ENCODE measurements at regions of chr9 and their contacts with region 1.

Region 1: DNA sequence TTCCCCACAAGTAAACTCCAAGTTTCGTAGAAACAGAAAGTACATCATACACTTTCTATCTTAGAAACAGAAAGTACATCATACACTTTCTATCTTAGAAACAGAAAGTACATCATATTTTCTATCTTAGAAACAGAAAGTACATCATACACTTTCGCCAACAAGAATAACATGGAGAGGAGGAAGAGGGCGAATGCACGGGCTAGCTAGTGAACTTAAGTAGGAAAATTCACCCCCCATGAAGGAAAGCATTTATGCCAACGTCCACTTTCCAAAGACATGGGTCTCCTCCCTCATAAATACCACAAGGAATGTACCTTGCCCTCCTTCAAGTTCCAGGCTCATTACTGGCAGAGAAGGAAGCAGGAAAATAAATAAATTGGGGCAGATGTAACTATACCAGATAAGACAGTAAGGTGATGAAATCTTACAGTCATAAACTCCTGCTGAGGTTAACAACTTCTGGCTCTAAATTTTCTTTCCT is 64.7 kb downstream of the FRMD3 start:
- DNase-seq: peak; percentile 14 to 45 (median 29)
- H3K4me3 ChIP-seq: peak overlapping the region; percentile 45 to 80 (median 72)
- H3K4me3 Mint-ChIP-seq: peak overlapping the region; percentile 78 to 91
- H3K27ac ChIP-seq: peak overlapping the region; percentile 97 to 98
- H3K27ac Mint-ChIP-seq: peak overlapping the region; percentile 98 to 100 (median 99)
- H3K4me1 ChIP-seq: peaks cover 47 to 49% of the 10 kb centered on the region in 2 donors
- H3K4me1 Mint-ChIP-seq: peaks cover 55% of the 10 kb centered on the region
- H3K27me3 ChIP-seq: no peaks in the 10 kb centered on the region
- H3K27me3 Mint-ChIP-seq: no peaks in the 10 kb centered on the region
- CTCF ChIP-seq: no peak

Region 2: GRCh38 chr9:83281306-83282255 is 191.9 kb before region 1 on chr9:
- intact Hi-C with region 1: no loop called
- DNase-seq: no peak
- H3K4me3 ChIP-seq: no peak overlapping the region
- H3K4me3 Mint-ChIP-seq: no peak overlapping the region
- H3K27ac ChIP-seq: no peak overlapping the region
- H3K27ac Mint-ChIP-seq: peak overlapping the region in 1 of 7 donors; percentile 55
- H3K4me1 ChIP-seq: peaks cover 0 to 4% of the 10 kb centered on the region in 2 donors
- H3K4me1 Mint-ChIP-seq: peaks cover 9% of the 10 kb centered on the region
- H3K27me3 ChIP-seq: no peaks in the 10 kb centered on the region
- H3K27me3 Mint-ChIP-seq: peaks cover 0 to 3% (median 2%) of the 10 kb centered on the region in 3 donors
- CTCF ChIP-seq: no peak

Region 3: DNA sequence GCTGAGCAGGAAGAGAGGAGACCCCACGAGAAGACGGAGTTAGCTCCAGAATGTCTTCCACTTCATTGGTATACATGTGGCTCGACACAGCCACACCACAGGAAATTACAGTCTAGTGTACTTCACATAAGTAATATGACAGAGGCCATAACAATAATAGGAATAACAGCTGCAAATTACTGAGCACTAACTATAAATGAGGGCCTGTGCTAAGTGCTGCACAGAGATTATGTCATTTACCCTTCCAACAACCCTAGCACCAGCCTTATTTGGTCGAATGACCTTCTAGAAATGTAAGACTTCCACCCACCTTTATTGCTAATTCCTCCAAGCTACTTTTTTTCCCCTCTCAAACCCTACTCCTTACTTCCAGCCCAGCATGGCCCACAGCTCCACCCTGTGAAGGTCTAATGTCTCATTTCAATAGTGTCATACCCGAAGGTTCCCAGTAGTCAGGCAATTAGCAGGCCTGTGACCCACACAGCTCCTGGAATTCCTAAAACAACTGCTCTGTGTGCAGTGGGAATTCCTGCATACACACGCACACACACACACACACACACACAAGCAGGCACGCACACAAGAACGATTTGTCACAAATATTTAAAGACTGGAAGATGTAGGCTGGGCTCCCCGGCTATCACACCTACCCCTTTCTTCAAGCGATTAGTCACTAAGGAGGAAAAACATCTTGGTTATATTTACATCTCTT is 69.8 kb before region 1 on chr9:
- intact Hi-C with region 1: loop called in 1 of 2 experiments (anchors 10 kb)
- DNase-seq: no peak
- H3K4me3 ChIP-seq: no peak overlapping the region
- H3K4me3 Mint-ChIP-seq: no peak overlapping the region
- H3K27ac ChIP-seq: no peak overlapping the region
- H3K27ac Mint-ChIP-seq: peak overlapping the region in 3 of 7 donors; percentile 1 to 54 (median 9)
- H3K4me1 ChIP-seq: peaks cover 23 to 33% of the 10 kb centered on the region in 2 donors
- H3K4me1 Mint-ChIP-seq: peaks cover 44% of the 10 kb centered on the region
- H3K27me3 ChIP-seq: no peaks in the 10 kb centered on the region
- H3K27me3 Mint-ChIP-seq: peaks cover 0 to 2% (median 0%) of the 10 kb centered on the region in 3 donors
- CTCF ChIP-seq: no peak

Region 4: GRCh38 chr9:83509402-83509801 is 35.9 kb after region 1 on chr9:
- intact Hi-C with region 1: loop called in 1 of 2 experiments (anchors 5 kb)
- DNase-seq: no peak
- H3K4me3 ChIP-seq: no peak overlapping the region
- H3K4me3 Mint-ChIP-seq: no peak overlapping the region
- H3K27ac ChIP-seq: no peak overlapping the region
- H3K27ac Mint-ChIP-seq: peak overlapping the region in 1 of 7 donors; percentile 35
- H3K4me1 ChIP-seq: peaks cover 38 to 51% of the 10 kb centered on the region in 2 donors
- H3K4me1 Mint-ChIP-seq: peaks cover 42% of the 10 kb centered on the region
- H3K27me3 ChIP-seq: no peaks in the 10 kb centered on the region
- H3K27me3 Mint-ChIP-seq: peaks cover 0 to 2% (median 0%) of the 10 kb centered on the region in 3 donors
- CTCF ChIP-seq: no peak

Region 5: GRCh38 chr9:83538172-83538889 is 64.8 kb after region 1 on chr9 and contains the start of gene FRMD3:
- intact Hi-C with region 1: loop called in 1 of 2 experiments (anchors 10 kb)
- DNase-seq: peak; percentile 75 to 83 (median 81)
- H3K4me3 ChIP-seq: peak within 1 kb of the TSS; percentile 46 to 84 (median 74)
- H3K4me3 Mint-ChIP-seq: peak within 1 kb of the TSS; percentile 84 to 88
- H3K27ac ChIP-seq: peak within 1 kb of the TSS in 1 of 2 donors; percentile 48
- H3K27ac Mint-ChIP-seq: peak within 1 kb of the TSS in 3 of 7 donors; percentile 14 to 42 (median 25)
- H3K4me1 ChIP-seq: peaks cover 25 to 30% of the 10 kb centered on the region in 2 donors
- H3K4me1 Mint-ChIP-seq: peaks cover 23% of the 10 kb centered on the region
- H3K27me3 ChIP-seq: peaks cover 17 to 20% of the 10 kb centered on the region in 2 donors
- H3K27me3 Mint-ChIP-seq: peaks cover 24 to 35% (median 34%) of the 10 kb centered on the region in 3 donors
- CTCF ChIP-seq: peak; percentile 80
- polyA plus RNA-seq, gene FRMD3: 2.8 to 9.8 (median 4.2) TPM

Region 6: GRCh38 chr9:83707768-83708514 is 234.4 kb after region 1 on chr9 and contains the start of gene UBQLN1:
- intact Hi-C with region 1: loop called in 1 of 2 experiments (anchors 5 kb)
- DNase-seq: peak; percentile 90 to 92 (median 92)
- H3K4me3 ChIP-seq: peak within 1 kb of the TSS; percentile 49 to 96 (median 90)
- H3K4me3 Mint-ChIP-seq: peak within 1 kb of the TSS; percentile 96 to 98
- H3K27ac ChIP-seq: peak within 1 kb of the TSS; percentile 99 to 100
- H3K27ac Mint-ChIP-seq: peak within 1 kb of the TSS; percentile 100
- H3K4me1 ChIP-seq: peaks cover 15 to 26% of the 10 kb centered on the region in 2 donors
- H3K4me1 Mint-ChIP-seq: peaks cover 30% of the 10 kb centered on the region
- H3K27me3 ChIP-seq: no peaks in the 10 kb centered on the region
- H3K27me3 Mint-ChIP-seq: peaks cover 0 to 1% (median 0%) of the 10 kb centered on the region in 3 donors
- CTCF ChIP-seq: no peak
- polyA plus RNA-seq, gene UBQLN1: 45.9 to 52.9 (median 46.9) TPM